Mammary epithelial cell (primary cell): ENCODE measurements at regions of chr17 and their contacts with region 1.

Region 1: GRCh38 chr17:72661093-72661944 is 431.2 kb downstream of the SLC39A11 start:
- DNase-seq: peak; percentile 100
- H3K4me3 ChIP-seq: no peak overlapping the region
- H3K27ac ChIP-seq: peak overlapping the region; percentile 83
- H3K4me1 ChIP-seq: peaks cover 37% of the 10 kb centered on the region
- H3K27me3 ChIP-seq: no peaks in the 10 kb centered on the region
- CTCF ChIP-seq: peak; percentile 71 to 74

Region 2: GRCh38 chr17:72609501-72609900 is 51.8 kb before region 1 on chr17:
- CTCF ChIA-PET with region 1: no interaction called
- dilution Hi-C with region 1: no loop called
- in situ Hi-C with region 1: no loop called
- intact Hi-C with region 1: loop called (anchors 1 kb)
- DNase-seq: peak; percentile 91
- H3K4me3 ChIP-seq: no peak overlapping the region
- H3K27ac ChIP-seq: peak overlapping the region; percentile 88
- H3K4me1 ChIP-seq: peaks cover 28% of the 10 kb centered on the region
- H3K27me3 ChIP-seq: no peaks in the 10 kb centered on the region
- CTCF ChIP-seq: no peak

Region 3: DNA sequence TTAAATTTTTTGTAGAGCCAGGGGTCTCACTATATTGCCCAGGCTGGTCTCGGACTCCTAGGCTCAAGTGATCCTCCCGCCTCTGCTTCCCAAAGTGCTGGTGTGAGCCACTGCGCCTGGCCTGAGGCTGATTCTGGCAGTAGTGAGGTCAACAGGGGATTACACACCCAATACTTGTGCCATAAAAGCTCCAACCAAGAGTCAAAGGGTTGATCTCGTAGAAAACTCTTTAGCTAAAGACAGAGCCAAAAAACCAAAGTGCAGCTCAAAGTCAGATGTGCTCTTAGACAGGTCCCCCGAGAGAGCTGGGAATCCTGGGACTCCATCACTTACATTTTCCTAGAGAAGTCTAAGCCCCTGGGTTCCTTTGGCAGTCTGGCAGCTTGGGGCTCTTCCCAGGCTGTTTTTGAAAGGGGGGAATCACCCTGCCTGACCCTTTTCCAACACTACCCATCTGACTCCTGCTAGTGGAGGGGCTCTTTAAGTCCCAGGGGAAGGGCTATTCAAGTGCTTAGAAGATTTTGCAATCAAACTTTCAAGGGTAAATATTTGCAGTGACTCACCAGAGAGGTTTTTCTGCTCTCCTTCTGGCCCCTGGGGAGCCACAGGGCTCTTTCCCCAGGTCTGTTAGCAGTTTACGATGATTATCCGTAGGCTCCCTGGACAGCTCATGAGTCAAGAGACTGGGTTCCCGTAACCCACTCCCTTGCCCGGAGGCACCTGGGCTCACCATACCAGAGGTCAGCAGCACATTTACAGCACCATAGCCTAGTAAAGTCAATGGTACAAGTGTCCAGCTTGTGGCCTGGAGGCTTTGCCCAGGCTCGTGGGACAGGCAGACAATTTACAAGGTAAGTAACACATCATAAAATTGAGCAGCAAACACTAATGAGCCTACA is 22.4 kb after region 1 on chr17:
- CTCF ChIA-PET with region 1: no interaction called
- dilution Hi-C with region 1: no loop called
- in situ Hi-C with region 1: no loop called
- intact Hi-C with region 1: loop called (anchors 1 kb)
- DNase-seq: peak; percentile 95
- H3K4me3 ChIP-seq: no peak overlapping the region
- H3K27ac ChIP-seq: peak overlapping the region; percentile 58
- H3K4me1 ChIP-seq: peaks cover 50% of the 10 kb centered on the region
- H3K27me3 ChIP-seq: no peaks in the 10 kb centered on the region
- CTCF ChIP-seq: no peak

Region 4: GRCh38 chr17:72715906-72716572 is 54.7 kb after region 1 on chr17:
- CTCF ChIA-PET with region 1: interaction called, 4 read pairs
- dilution Hi-C with region 1: no loop called
- in situ Hi-C with region 1: no loop called
- intact Hi-C with region 1: loop called (anchors 1 kb)
- DNase-seq: peak; percentile 96
- H3K4me3 ChIP-seq: no peak overlapping the region
- H3K27ac ChIP-seq: peak overlapping the region; percentile 87
- H3K4me1 ChIP-seq: peaks cover 25% of the 10 kb centered on the region
- H3K27me3 ChIP-seq: no peaks in the 10 kb centered on the region
- CTCF ChIP-seq: no peak